ENCODE measurements at regions of chr7 and their contacts with region 1.

Region 1: GRCh38 chr7:65269150-65269856 is 104.4 kb upstream of the ZNF92 start:
- DNase-seq: peak; percentile 77
- ATAC-seq: peak; percentile 96
- H3K4me3 Mint-ChIP-seq: peak overlapping the region; percentile 72
- H3K27ac Mint-ChIP-seq: peak overlapping the region; percentile 51
- H3K4me1 Mint-ChIP-seq: peaks cover 6% of the 10 kb centered on the region
- H3K27me3 Mint-ChIP-seq: peaks cover 34% of the 10 kb centered on the region

Region 2: GRCh38 chr7:65325793-65326432 is 56.6 kb after region 1 on chr7:
- CTCF ChIA-PET with region 1: no interaction called
- POLR2A ChIA-PET with region 1: no interaction called
- intact Hi-C with region 1: loop called in 1 of 2 experiments (anchors 5 kb)
- DNase-seq: no peak
- ATAC-seq: no peak
- H3K4me3 Mint-ChIP-seq: no peak overlapping the region
- H3K27ac Mint-ChIP-seq: no peak overlapping the region
- H3K4me1 Mint-ChIP-seq: peaks cover 2% of the 10 kb centered on the region
- H3K27me3 Mint-ChIP-seq: no peaks in the 10 kb centered on the region

Measured in activated CD4-positive, alpha-beta T cell treated with anti-CD3 and anti-CD28 coated beads for 36 hours (primary cell).